MCF 10A (cell line): ENCODE measurements at regions of chr6 and their contacts with region 1.

Region 1: DNA sequence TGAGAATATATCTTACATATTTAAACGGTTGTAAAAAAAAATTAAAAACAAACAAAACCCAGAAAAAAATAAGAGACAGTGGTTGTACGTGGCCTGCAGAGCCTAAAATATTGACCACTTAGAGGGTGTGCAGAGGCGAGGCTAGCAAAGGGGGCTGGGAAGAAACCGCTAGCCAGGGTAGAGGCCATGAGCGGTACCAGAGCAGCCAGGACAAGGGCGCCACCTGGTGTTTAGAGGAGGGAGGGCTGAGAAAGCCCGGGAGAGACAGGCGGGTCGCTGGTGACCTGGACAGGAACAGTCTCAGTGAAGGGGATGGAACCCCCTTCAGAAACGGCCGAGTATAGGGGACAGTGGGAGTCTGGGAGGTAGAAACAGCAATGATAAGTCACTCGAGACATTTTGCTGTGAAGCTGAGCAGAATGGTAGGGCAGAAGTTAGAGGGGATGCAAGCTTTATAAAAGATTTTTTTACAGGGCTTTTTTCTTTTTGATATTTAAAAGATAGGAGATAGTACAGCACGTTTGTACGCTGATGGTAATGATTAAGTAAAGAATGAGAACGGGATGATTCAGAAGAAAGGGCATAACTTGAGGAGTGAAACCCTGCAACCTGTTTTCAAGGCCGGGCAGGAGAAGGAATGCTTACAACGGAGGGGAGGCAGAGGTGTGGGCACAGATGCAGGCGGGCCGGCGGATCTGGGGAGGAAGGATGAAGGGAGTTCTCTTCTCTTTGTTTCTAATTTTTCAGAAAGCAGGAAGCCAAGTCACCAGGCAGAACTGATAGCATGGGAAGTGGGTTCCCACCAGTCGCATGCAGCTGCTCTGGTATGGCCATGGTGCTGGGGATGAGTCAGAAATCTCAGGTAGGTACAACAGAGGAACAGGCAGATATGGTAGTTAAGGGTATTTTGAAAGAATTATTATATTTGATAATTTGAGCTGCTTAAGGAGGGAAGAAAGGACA is 76.2 kb downstream of the FAM229B start:
- DNase-seq: peak; percentile 71
- H3K4me3 Mint-ChIP-seq: no peak overlapping the region
- H3K27ac Mint-ChIP-seq: no peak overlapping the region
- H3K4me1 Mint-ChIP-seq: peaks cover 6% of the 10 kb centered on the region
- H3K27me3 Mint-ChIP-seq: peaks cover 51% of the 10 kb centered on the region
- CTCF ChIP-seq: peak; percentile 85

Region 2: GRCh38 chr6:111696814-111697213 is 466.8 kb before region 1 on chr6:
- CTCF ChIA-PET with region 1: interaction called, 11 read pairs
- POLR2A ChIA-PET with region 1: no interaction called
- intact Hi-C with region 1: no loop called
- DNase-seq: no peak
- H3K4me3 Mint-ChIP-seq: no peak overlapping the region
- H3K27ac Mint-ChIP-seq: no peak overlapping the region
- H3K4me1 Mint-ChIP-seq: no peaks in the 10 kb centered on the region
- H3K27me3 Mint-ChIP-seq: no peaks in the 10 kb centered on the region
- CTCF ChIP-seq: no peak

Region 3: DNA sequence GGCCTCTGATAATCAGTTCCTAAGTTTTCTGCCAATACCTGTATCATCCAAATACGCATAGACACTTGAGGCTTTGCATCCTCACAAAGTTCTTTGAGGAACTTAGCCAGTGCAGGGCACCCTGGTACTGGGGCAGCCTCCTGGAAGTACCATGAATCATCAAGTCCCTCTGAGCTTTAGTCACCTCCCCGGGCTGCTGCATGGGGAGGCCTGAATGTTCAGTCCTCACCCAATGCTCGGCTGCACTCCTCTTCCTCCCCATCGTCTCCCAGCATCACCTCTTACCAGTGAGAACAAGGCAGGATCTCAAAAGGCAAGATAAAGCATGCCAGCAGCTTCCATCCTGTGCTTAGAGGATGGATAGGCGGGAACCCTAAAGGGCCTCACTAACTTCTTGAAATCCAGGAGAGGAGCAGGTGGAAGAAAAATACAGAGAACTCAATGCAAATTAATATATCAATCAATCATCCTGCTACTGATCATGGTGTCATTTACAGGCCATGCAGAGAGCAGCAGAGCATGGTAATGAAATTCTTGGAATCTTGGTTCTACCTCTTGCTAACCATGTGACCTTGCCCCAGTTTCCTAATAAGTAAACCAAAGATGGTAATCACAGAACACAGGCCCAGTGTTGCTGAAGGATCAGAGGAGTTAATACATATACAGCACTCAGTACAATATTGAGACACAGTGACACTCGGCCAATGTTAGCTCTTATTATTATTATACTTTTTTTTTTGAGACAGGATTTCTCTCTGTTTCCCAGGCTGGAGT is 114.4 kb before region 1 on chr6:
- CTCF ChIA-PET with region 1: interaction called, 32 read pairs
- POLR2A ChIA-PET with region 1: no interaction called
- intact Hi-C with region 1: no loop called
- DNase-seq: peak; percentile 11
- H3K4me3 Mint-ChIP-seq: no peak overlapping the region
- H3K27ac Mint-ChIP-seq: no peak overlapping the region
- H3K4me1 Mint-ChIP-seq: no peaks in the 10 kb centered on the region
- H3K27me3 Mint-ChIP-seq: no peaks in the 10 kb centered on the region
- CTCF ChIP-seq: no peak

Region 4: DNA sequence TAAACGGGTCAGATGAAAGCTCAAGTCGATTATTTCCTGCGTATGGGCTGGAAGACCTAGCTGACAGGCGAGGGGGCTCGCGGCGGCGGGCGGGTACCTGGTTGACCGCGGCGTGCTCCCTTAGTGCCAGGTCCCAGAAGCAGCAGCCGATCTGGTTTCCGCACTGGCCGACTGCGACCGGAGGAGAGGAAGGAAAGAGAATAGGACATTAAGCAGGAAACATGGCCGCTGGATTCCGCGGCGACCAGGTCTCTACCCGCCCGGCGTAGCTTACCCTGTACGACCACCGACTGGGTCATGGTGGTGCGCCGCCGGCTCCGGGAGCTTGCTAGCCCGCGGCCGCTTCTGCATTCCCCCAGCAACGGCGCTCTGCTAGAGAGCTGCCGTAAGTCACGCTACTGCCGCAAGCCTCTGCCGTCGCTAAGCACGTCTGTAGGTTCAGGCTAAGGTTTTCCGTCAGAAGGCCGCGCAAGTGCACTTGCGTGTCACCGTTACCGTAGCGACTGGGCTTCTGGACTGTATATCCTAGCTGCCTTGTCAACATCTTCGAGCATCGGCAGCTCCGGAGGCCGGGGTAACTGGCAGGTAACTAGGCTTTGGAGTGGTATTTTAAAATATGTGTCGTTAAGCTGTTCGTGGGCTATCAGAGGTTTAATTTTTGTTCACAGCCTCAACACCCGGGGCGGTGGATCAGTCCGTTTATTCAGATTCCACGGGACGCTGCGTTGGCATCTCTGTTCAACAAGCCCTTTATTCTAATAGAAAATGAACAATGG is 76.3 kb before region 1 on chr6 and contains the starts of genes FAM229B and TUBE1:
- CTCF ChIA-PET with region 1: interaction called, 143 read pairs
- POLR2A ChIA-PET with region 1: interaction called, 16 read pairs
- intact Hi-C with region 1: loop called (anchors 1 kb)
- DNase-seq: peak; percentile 93
- H3K4me3 Mint-ChIP-seq: no peak within 1 kb of the TSS
- H3K27ac Mint-ChIP-seq: no peak within 1 kb of the TSS
- H3K4me1 Mint-ChIP-seq: no peaks in the 10 kb centered on the region
- H3K27me3 Mint-ChIP-seq: no peaks in the 10 kb centered on the region
- CTCF ChIP-seq: no peak
- total RNA-seq, gene FAM229B: 10.8 and 11.3 TPM in 2 replicates
- total RNA-seq, gene TUBE1: 42.9 and 47.7 TPM in 2 replicates

Region 5: DNA sequence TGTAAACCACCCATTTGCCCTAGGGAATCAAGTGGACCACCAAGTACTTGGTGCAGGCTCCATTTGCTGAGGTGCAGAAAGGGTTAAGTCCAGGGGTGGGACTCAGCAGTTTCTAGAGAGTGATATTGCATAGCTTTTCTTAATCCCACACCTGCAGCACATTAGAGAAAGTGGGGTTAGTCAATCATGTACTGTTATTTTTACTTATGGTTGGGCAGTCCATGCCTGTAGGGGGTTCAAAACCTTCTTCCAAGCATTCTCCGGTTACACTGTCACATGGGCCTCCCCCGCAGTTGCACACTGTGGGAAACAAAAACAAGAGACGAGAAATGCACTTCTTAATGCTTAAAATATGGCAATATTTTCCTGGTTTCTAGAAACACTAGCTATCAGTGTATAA is 25.3 kb after region 1 on chr6:
- CTCF ChIA-PET with region 1: interaction called, 13 read pairs
- POLR2A ChIA-PET with region 1: no interaction called
- intact Hi-C with region 1: no loop called
- DNase-seq: peak; percentile 73
- H3K4me3 Mint-ChIP-seq: no peak overlapping the region
- H3K27ac Mint-ChIP-seq: no peak overlapping the region
- H3K4me1 Mint-ChIP-seq: peaks cover 9% of the 10 kb centered on the region
- H3K27me3 Mint-ChIP-seq: no peaks in the 10 kb centered on the region
- CTCF ChIP-seq: no peak